A673 (cell line): ENCODE measurements at regions of chr1 and their contacts with region 1.

Region 1: GRCh38 chr1:119787776-119788175 is 19.1 kb upstream of the HMGCS2 start:
- DNase-seq: no peak
- H3K4me3 ChIP-seq: no peak overlapping the region
- H3K27ac ChIP-seq: no peak overlapping the region
- H3K4me1 ChIP-seq: no peaks in the 10 kb centered on the region
- H3K27me3 ChIP-seq: peaks cover 4% of the 10 kb centered on the region
- CTCF ChIP-seq: no peak

Region 2: GRCh38 chr1:119773711-119774241 is 14.0 kb before region 1 on chr1:
- CTCF ChIA-PET with region 1: no interaction called
- POLR2A ChIA-PET with region 1: interaction called, 7 read pairs
- intact Hi-C with region 1: loop called (anchors 2 kb)
- DNase-seq: no peak
- H3K4me3 ChIP-seq: no peak overlapping the region
- H3K27ac ChIP-seq: no peak overlapping the region
- H3K4me1 ChIP-seq: peaks cover 15% of the 10 kb centered on the region
- H3K27me3 ChIP-seq: no peaks in the 10 kb centered on the region
- CTCF ChIP-seq: no peak

Region 3: DNA sequence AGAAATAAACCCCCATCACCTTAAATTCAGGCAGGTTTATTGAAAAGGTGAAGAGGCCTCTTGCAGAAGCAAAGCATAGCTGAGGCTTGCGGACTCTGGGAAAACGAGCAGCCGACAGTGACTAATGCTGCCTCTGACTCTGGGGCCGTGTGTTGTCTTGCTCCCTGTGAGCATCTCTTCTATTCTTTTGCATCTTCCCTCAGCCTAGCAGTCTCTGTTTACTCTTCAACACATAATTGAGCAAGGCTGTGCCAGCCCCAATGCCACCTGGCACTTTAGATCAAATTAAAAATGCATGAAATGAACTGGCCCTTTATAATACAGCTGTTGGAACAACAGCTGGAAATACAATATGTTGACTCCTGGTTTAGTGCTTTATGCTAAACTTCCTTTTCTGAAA is 41.8 kb after region 1 on chr1:
- CTCF ChIA-PET with region 1: no interaction called
- POLR2A ChIA-PET with region 1: no interaction called
- intact Hi-C with region 1: no loop called
- DNase-seq: no peak
- H3K4me3 ChIP-seq: no peak overlapping the region
- H3K27ac ChIP-seq: no peak overlapping the region
- H3K4me1 ChIP-seq: no peaks in the 10 kb centered on the region
- H3K27me3 ChIP-seq: no peaks in the 10 kb centered on the region
- CTCF ChIP-seq: no peak